Ascending aorta (tissue), 2 donors: ENCODE measurements at regions of chr18 and their contacts with region 1.

Region 1: DNA sequence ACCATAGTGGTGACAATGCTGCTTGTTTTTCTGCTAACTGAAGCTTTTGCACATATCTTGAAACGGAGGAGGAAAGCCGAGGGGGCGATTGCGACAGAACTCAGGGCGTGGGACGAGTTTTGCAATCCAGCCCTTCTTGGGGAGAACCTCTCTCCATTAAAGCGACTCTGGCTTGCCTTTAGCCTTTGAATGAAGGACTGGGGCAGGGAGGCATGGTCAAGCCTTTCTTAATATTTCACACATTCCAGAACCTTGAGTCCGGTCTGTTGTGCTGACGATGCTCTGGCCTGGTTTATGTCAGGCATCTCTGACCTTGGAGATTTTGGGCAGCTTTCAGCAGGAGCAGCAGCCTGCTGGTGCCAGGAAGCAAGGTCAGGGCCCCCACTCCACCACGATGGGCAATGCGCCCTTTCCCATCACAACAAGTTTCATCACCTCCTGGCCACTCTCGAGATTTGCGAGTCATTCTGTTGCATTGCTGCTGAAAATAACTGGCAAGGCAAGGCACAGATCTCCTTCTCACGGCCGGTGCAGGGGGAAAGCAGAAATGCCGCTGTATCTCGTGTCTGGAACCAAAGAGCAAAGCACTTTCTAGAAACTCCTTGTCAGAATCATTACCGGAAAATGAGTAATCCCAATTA is 10.8 kb downstream of the EMILIN2 start:
- DNase-seq: peak; percentile 36 to 94
- H3K4me3 ChIP-seq: peak overlapping the region in 1 of 2 donors; percentile 2
- H3K27ac ChIP-seq: peak overlapping the region; percentile 55 to 78
- H3K4me1 ChIP-seq: peaks cover 0 to 25% of the 10 kb centered on the region in 2 donors
- H3K27me3 ChIP-seq: no peaks in the 10 kb centered on the region
- CTCF ChIP-seq: peak in 1 of 3 experiments; percentile 9

Region 2: DNA sequence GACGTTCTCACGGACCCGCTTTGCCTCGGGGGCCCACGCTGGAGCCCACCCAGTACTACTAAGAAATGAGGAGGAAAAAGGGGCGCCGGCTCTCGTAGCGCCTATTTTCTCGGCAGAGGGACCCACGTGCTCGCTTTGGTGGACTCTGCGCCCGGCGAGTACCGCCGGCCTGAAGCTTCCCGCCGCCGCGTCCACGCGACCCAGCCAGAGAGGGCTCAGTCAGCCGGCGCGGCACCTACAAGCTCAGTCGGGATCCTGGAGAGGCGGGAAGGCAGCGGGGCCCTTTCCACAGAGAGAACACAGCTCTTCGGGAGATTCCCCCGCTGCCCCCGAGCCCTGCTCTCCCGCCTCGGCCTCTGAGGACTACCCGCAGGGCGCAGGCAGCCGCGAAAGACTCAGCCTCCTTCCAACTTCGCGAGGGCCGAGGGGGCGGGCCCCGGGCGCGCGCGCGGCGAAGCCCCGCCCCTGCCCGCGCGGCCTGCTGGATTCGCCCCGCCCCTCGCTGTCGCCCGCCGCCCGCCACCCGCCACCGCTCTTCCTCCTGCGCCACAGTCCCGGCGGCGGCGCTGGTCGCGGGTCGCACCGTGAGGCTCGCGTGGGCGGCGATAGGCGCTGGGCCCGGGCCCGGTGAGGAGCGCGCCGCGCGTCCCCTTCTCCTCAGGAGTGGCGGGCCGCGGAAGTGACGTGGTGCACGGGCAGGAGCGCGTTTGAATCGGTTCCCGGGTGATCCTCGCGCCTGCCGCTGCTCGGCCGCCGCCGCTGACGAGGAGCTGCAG is 202.2 kb before region 1 on chr18 and contains the start of gene SMCHD1:
- intact Hi-C with region 1: loop called (anchors 5 kb)
- DNase-seq: peak; percentile 66 to 93
- H3K4me3 ChIP-seq: peak within 1 kb of the TSS; percentile 83 to 95
- H3K27ac ChIP-seq: peak within 1 kb of the TSS; percentile 97 to 98
- H3K4me1 ChIP-seq: peaks cover 3 to 27% of the 10 kb centered on the region in 2 donors
- H3K27me3 ChIP-seq: no peaks in the 10 kb centered on the region
- CTCF ChIP-seq: no peak
- total RNA-seq, gene SMCHD1: 29.2 TPM

Region 3: DNA sequence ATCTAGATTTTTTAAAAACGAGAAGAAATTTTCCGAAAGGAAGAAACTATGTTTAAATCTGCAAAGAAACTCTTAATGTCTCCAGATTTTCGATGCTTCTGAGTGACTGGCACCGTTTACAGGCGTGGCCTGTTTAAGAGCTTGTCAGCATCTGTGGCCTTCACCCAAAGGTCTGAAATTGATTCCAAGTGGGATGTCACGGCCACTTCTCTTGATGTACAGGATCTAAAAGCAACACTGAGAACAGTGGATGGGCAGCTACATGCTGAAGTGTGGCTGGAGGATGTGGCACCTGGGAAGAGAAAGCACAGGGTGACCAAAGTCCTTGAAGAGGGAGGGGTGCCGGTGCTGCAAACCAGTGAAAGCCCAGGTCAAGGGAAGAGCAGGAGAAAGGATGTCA is 17.2 kb after region 1 on chr18:
- intact Hi-C with region 1: loop called (anchors 2 kb)
- DNase-seq: no peak
- H3K4me3 ChIP-seq: peak overlapping the region in 1 of 2 donors; percentile 34
- H3K27ac ChIP-seq: peak overlapping the region; percentile 63 to 84
- H3K4me1 ChIP-seq: peaks cover 0 to 26% of the 10 kb centered on the region in 2 donors
- H3K27me3 ChIP-seq: no peaks in the 10 kb centered on the region
- CTCF ChIP-seq: no peak